ENCODE measurements at regions of chr5 and their contacts with region 1.

Region 1: DNA sequence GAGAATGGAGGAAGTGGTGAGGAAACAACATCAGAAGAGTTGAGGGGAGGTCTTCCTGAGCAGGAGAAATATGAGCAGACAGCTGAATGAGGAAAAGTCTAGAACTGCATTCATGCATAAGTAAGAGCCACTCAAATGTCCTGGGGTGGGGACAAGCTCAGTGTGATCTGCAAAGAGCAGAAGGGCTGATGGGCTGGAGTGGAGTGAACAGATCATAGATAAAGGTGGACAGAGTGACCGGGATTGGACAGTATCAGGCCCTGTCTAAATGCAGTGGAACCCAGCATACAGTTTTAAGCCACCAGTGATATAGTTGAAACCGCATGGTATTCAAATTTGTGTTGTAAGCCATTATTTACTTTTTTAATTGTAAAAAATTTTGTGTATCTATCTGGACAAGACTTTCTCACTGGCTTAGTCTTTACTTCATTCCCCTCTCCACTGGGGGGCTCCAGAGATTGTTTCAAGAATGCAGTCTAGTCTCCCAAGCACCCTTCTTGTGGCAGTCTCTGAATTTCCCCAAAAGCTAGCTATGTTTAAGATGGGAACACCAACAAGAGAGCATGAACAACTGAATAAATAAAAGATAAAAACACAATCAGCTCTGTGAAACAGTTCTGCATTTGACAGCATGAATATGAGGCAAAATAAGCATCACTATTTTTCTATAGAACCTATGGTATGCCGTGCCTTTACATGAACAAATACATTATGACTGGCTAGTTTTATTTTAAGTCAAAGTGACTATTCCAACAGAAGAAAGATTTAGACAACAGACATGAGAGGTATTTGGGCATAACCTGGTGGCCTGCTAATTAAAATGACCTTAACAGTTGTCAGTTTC is 10.7 kb upstream of the STK32A start:
- DNase-seq: peak; percentile 78
- H3K4me3 Mint-ChIP-seq: no peak overlapping the region
- H3K27ac Mint-ChIP-seq: no peak overlapping the region
- H3K4me1 Mint-ChIP-seq: peaks cover 7% of the 10 kb centered on the region
- H3K27me3 Mint-ChIP-seq: peaks cover 44% of the 10 kb centered on the region
- CTCF ChIP-seq: peak; percentile 87

Region 2: GRCh38 chr5:147346006-147346561 is 121.9 kb after region 1 on chr5:
- CTCF ChIA-PET with region 1: interaction called, 13 read pairs
- POLR2A ChIA-PET with region 1: no interaction called
- intact Hi-C with region 1: no loop called
- DNase-seq: peak; percentile 23
- H3K4me3 Mint-ChIP-seq: no peak overlapping the region
- H3K27ac Mint-ChIP-seq: no peak overlapping the region
- H3K4me1 Mint-ChIP-seq: peaks cover 11% of the 10 kb centered on the region
- H3K27me3 Mint-ChIP-seq: no peaks in the 10 kb centered on the region
- CTCF ChIP-seq: no peak

Region 3: DNA sequence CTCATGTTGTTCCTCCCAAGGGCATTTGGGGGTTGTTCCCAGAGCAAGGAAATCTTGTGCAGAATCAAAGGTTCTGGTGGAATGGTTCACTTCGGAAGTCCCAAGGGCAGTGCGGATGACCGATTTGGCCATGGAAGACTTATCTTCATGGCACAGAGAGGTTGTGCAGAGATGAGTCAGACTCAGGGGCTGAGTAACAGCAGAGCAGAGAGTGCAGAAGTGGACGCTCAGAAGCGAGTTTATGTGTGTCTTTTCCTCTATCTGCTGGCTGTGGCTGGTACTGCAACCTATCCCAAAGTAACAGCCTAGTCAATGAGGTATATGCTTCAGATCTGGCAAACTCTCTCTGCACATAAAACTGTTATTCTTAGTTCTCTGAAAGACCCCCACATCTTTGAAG is 167.6 kb after region 1 on chr5:
- CTCF ChIA-PET with region 1: interaction called, 25 read pairs
- POLR2A ChIA-PET with region 1: no interaction called
- intact Hi-C with region 1: loop called (anchors 1 kb)
- DNase-seq: peak; percentile 89
- H3K4me3 Mint-ChIP-seq: no peak overlapping the region
- H3K27ac Mint-ChIP-seq: no peak overlapping the region
- H3K4me1 Mint-ChIP-seq: no peaks in the 10 kb centered on the region
- H3K27me3 Mint-ChIP-seq: no peaks in the 10 kb centered on the region
- CTCF ChIP-seq: peak; percentile 87

Region 4: GRCh38 chr5:147397616-147398015 is 173.4 kb after region 1 on chr5:
- CTCF ChIA-PET with region 1: interaction called, 25 read pairs
- POLR2A ChIA-PET with region 1: no interaction called
- intact Hi-C with region 1: loop called (anchors 1 kb)
- DNase-seq: no peak
- H3K4me3 Mint-ChIP-seq: no peak overlapping the region
- H3K27ac Mint-ChIP-seq: no peak overlapping the region
- H3K4me1 Mint-ChIP-seq: no peaks in the 10 kb centered on the region
- H3K27me3 Mint-ChIP-seq: no peaks in the 10 kb centered on the region
- CTCF ChIP-seq: no peak

Region 5: GRCh38 chr5:147558826-147559225 is 334.7 kb after region 1 on chr5:
- CTCF ChIA-PET with region 1: no interaction called
- POLR2A ChIA-PET with region 1: no interaction called
- intact Hi-C with region 1: loop called (anchors 1 kb)
- DNase-seq: peak; percentile 74
- H3K4me3 Mint-ChIP-seq: no peak overlapping the region
- H3K27ac Mint-ChIP-seq: no peak overlapping the region
- H3K4me1 Mint-ChIP-seq: peaks cover 5% of the 10 kb centered on the region
- H3K27me3 Mint-ChIP-seq: no peaks in the 10 kb centered on the region
- CTCF ChIP-seq: peak; percentile 81

Measured in MCF 10A (cell line).